ENCODE measurements at regions of chr2 and their contacts with region 1.

Region 1: DNA sequence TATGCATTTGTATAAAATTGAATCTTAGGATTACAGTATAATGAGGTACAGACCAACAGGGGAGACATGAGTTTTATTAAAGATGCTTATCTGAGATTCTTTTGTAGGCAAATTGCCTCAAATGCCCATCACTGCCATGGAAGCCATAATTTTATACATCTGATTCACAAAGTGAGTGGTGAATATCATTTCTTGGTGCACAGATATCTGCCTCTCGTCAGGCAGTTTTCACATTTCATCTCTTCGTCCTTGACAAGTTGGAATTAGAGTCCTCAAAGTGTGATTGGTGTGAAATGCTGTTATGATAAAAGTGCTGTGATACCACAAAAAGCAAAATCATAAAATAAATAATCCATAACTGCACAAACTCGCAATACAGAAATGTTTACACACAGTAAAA is 1602.8 kb upstream of the DDX18 start:
- DNase-seq: no peak
- ATAC-seq: no peak
- H3K4me3 ChIP-seq: no peak overlapping the region
- H3K27ac ChIP-seq: no peak overlapping the region
- H3K4me1 ChIP-seq: no peaks in the 10 kb centered on the region
- H3K27me3 ChIP-seq: no peaks in the 10 kb centered on the region
- CTCF ChIP-seq: no peak

Region 2: DNA sequence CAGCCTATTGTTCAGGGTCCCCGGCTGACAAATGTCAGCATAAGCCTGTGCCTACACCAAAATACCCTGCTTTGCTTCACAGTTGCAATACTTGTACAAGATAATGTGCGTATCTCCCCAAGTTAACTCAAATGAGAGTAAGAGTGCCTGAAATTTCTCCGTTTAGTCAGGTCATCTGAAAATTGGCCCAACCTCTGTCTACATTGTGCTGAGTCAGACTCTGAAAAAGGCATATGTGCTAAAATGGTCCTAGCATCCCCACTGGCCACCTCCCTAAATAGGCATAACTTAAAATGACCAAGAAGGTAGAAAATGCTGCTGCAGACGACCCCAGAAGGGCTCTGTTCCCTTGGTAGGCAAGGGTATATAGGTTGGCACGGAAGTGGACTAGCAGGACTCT is 51.1 kb before region 1 on chr2:
- CTCF ChIA-PET with region 1: no interaction called
- POLR2A ChIA-PET with region 1: no interaction called
- intact Hi-C with region 1: no loop called
- DNase-seq: no peak
- ATAC-seq: no peak
- H3K4me3 ChIP-seq: no peak overlapping the region
- H3K27ac ChIP-seq: no peak overlapping the region
- H3K4me1 ChIP-seq: no peaks in the 10 kb centered on the region
- H3K27me3 ChIP-seq: no peaks in the 10 kb centered on the region
- CTCF ChIP-seq: no peak

Region 3: DNA sequence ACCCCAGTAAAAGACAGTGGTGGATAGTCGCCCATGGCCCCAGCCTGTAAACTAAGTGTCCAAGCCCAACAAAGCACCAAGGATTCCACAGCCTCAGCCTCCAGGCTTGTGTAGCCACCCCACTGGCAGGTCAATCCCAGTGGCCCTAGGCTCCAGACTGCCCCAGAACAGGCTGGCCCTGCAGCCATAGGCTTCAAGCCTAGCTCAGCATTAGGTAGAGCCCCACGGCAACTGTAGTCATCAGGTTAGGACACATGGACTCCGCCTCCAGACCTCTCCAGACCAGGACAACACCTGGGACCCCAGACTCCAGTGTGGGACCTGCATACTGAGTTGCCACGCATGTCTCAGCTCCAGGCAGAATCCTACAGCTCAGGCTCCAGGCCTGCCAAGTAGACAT is 12.2 kb after region 1 on chr2:
- CTCF ChIA-PET with region 1: no interaction called
- POLR2A ChIA-PET with region 1: no interaction called
- intact Hi-C with region 1: loop called (anchors 1 kb)
- DNase-seq: no peak
- ATAC-seq: no peak
- H3K4me3 ChIP-seq: no peak overlapping the region
- H3K27ac ChIP-seq: no peak overlapping the region
- H3K4me1 ChIP-seq: no peaks in the 10 kb centered on the region
- H3K27me3 ChIP-seq: no peaks in the 10 kb centered on the region
- CTCF ChIP-seq: no peak

Measured in PC-3 (cell line).